ENCODE measurements at regions of chr3 and their contacts with region 1.

Region 1: DNA sequence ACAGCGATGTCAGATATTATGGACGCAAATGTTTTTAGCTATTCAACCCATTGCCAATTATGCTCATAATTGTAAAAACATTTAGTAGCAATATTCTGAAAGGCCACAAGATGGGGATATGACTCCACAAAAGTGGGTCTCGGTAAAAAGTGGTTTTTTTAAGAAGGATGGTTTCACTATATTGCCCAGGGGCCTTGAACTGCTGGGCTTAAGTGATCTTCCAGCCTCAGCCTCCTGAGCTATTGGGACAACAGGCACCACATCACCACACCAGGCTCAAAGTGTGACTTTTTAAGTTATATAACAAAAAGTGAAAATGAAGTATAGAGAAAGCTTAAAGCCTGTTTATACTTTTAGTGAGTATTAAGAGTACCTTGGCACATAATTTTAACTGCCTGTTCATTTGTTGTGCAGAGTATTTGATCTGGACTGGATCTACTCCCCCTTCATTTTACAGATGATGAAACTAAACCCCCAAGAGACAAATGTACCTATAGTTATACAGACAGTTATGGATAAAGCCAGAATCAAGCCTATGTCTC is 9.4 kb downstream of the NAA50 start:
- DNase-seq: peak; percentile 19
- H3K4me3 Mint-ChIP-seq: no peak overlapping the region
- H3K27ac Mint-ChIP-seq: peak overlapping the region; percentile 15
- H3K4me1 Mint-ChIP-seq: peaks cover 50% of the 10 kb centered on the region
- H3K27me3 Mint-ChIP-seq: no peaks in the 10 kb centered on the region

Region 2: GRCh38 chr3:113712129-113712528 is 24.5 kb before region 1 on chr3:
- CTCF ChIA-PET with region 1: interaction called, 29 read pairs
- POLR2A ChIA-PET with region 1: no interaction called
- intact Hi-C with region 1: no loop called
- DNase-seq: no peak
- H3K4me3 Mint-ChIP-seq: no peak overlapping the region
- H3K27ac Mint-ChIP-seq: no peak overlapping the region
- H3K4me1 Mint-ChIP-seq: peaks cover 3% of the 10 kb centered on the region
- H3K27me3 Mint-ChIP-seq: peaks cover 3% of the 10 kb centered on the region

Region 3: DNA sequence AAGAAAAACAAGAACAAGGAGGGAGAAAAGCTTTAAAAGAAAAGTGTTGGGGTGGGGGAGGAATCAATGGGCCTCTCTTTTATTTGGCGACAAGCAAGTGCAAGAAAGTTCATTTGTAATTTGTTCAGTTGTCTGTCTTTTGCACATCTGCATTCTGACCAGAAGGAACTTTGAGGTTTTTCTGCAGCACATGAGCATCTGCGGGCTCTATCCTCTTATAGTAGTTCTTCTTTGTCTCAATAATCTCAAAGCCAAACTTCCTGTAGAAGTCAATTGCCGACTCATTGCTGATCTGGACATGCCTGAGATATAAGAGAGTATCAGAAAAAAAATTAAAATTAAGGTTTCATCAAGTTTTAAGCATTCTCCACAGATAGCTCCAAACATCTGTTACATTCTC is 15.0 kb before region 1 on chr3:
- CTCF ChIA-PET with region 1: interaction called, 29 read pairs
- POLR2A ChIA-PET with region 1: no interaction called
- intact Hi-C with region 1: no loop called
- DNase-seq: no peak
- H3K4me3 Mint-ChIP-seq: no peak overlapping the region
- H3K27ac Mint-ChIP-seq: no peak overlapping the region
- H3K4me1 Mint-ChIP-seq: peaks cover 9% of the 10 kb centered on the region
- H3K27me3 Mint-ChIP-seq: no peaks in the 10 kb centered on the region

Region 4: GRCh38 chr3:113795693-113796092 is 59.1 kb after region 1 on chr3:
- CTCF ChIA-PET with region 1: interaction called, 16 read pairs
- POLR2A ChIA-PET with region 1: no interaction called
- intact Hi-C with region 1: no loop called
- DNase-seq: no peak
- H3K4me3 Mint-ChIP-seq: no peak overlapping the region
- H3K27ac Mint-ChIP-seq: no peak overlapping the region
- H3K4me1 Mint-ChIP-seq: no peaks in the 10 kb centered on the region
- H3K27me3 Mint-ChIP-seq: no peaks in the 10 kb centered on the region

Region 5: DNA sequence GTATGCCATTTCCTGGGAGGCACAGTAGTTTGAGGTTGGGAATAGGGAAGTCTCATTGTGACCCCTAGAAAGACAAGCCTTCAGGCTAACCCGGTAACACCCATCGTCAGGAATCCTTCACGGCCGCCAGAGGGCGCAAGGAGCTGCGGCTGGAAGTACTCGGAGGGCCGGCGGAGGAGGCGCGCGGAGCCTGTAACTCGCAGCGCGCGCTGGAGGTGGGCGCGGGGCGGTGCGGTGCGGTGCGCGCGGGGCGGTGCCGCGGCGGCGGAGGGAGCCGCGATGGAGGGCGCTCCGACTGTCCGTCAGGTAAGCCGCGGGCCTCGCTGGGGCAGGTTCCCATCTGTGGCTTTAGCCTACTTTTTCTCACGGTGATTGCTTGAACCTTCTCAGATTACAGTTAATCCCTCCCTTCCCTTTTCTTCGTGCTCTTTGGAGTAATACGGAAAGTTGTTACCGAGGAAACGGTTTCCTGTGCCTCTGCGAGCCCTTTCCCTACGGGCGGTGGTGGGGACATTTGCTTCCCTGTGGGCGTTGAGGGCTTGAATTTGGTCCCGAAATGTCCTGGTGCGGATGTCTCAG is 102.1 kb after region 1 on chr3 and contains the start of gene GRAMD1C:
- CTCF ChIA-PET with region 1: interaction called, 24 read pairs
- POLR2A ChIA-PET with region 1: no interaction called
- intact Hi-C with region 1: loop called (anchors 1 kb)
- DNase-seq: peak; percentile 89
- H3K4me3 Mint-ChIP-seq: peak within 1 kb of the TSS; percentile 68
- H3K27ac Mint-ChIP-seq: no peak within 1 kb of the TSS
- H3K4me1 Mint-ChIP-seq: peaks cover 6% of the 10 kb centered on the region
- H3K27me3 Mint-ChIP-seq: no peaks in the 10 kb centered on the region
- total RNA-seq, gene GRAMD1C: 0.64 to 1.2 TPM

Region 6: DNA sequence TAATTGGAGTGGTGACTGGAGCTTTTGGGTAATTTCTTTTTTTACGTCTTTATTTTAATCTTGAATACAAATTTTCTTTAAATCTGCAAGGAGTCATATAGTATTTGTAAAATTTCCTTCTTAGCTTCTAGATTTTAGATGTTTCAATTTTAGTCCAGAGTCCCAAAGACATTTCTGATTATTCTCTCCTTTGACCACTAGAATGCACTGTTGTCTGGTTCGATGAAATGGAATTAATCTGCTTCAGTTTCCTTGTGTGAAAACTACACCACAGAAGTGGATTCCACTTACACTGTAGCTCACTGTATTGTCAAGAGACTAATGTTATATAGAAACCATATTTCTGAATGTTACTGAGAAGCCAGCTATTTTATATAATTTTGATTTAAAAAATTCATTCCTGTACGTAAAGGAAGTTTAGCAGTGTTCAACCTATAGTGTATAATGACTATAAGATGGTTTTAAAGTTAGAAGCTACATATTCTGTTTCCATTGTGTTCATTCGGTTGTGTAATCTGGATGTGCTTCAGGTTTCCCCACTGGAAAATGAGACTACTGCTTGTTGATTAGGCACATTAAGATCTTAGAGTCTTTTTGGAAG is 108.1 kb after region 1 on chr3:
- CTCF ChIA-PET with region 1: interaction called, 24 read pairs
- POLR2A ChIA-PET with region 1: no interaction called
- intact Hi-C with region 1: no loop called
- DNase-seq: no peak
- H3K4me3 Mint-ChIP-seq: no peak overlapping the region
- H3K27ac Mint-ChIP-seq: no peak overlapping the region
- H3K4me1 Mint-ChIP-seq: no peaks in the 10 kb centered on the region
- H3K27me3 Mint-ChIP-seq: no peaks in the 10 kb centered on the region

Region 7: DNA sequence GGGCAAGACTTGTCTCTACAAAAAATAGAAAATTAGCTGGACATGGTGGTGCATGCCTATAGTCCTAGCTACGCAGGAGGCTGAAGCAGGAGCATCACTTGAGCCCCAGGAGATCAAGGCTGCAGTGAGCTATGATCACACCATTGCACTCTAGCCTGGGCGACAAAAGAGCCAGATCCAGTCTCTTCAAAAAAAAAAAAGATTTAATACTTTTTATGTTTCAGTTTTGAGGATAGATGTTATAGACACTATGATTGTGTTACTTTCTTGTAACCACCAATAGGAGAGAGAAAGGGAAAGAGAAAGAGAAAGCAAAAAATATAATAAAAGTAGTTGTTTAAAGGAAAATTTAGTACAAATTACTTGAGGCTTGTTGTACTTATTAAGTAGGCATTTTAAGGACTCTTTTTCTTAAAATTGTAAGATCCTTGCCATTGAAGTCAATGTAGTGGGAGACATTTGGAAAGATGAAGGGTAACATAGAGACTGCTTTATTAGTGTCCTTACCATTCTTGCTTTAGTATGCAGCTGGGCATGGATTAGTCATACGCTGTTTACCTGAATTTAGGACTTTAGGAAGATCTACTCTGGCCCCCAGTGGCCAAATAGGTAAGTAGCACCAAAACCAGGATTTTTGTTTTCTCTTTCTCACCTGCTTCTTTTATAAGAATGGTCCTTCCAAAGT is 176.1 kb after region 1 on chr3:
- CTCF ChIA-PET with region 1: interaction called, 12 read pairs
- POLR2A ChIA-PET with region 1: no interaction called
- intact Hi-C with region 1: loop called (anchors 1 kb)
- DNase-seq: peak; percentile 36
- H3K4me3 Mint-ChIP-seq: no peak overlapping the region
- H3K27ac Mint-ChIP-seq: no peak overlapping the region
- H3K4me1 Mint-ChIP-seq: peaks cover 4% of the 10 kb centered on the region
- H3K27me3 Mint-ChIP-seq: no peaks in the 10 kb centered on the region

Region 8: GRCh38 chr3:114480442-114480841 is 743.8 kb after region 1 on chr3:
- CTCF ChIA-PET with region 1: no interaction called
- POLR2A ChIA-PET with region 1: no interaction called
- intact Hi-C with region 1: no loop called
- DNase-seq: no peak
- H3K4me3 Mint-ChIP-seq: no peak overlapping the region
- H3K27ac Mint-ChIP-seq: no peak overlapping the region
- H3K4me1 Mint-ChIP-seq: peaks cover 17% of the 10 kb centered on the region
- H3K27me3 Mint-ChIP-seq: no peaks in the 10 kb centered on the region

Measured in activated CD4-positive, alpha-beta memory T cell treated with anti-CD3 and anti-CD28 coated beads for 36 hours (primary cell).